Activated T-helper 2 cell treated with anti-CD3 and anti-CD28 coated beads, Interferon-gamma antibody, Interleukin-2, Interleukin-4, amounts not matched to agents 10 μg/mL and 5 μg/mL and 100 μg/mL, durations not matched to agents 14 hours and 24 hours and 36 hours (primary cell): ENCODE measurements at regions of chr11 and their contacts with region 1.

Region 1: DNA sequence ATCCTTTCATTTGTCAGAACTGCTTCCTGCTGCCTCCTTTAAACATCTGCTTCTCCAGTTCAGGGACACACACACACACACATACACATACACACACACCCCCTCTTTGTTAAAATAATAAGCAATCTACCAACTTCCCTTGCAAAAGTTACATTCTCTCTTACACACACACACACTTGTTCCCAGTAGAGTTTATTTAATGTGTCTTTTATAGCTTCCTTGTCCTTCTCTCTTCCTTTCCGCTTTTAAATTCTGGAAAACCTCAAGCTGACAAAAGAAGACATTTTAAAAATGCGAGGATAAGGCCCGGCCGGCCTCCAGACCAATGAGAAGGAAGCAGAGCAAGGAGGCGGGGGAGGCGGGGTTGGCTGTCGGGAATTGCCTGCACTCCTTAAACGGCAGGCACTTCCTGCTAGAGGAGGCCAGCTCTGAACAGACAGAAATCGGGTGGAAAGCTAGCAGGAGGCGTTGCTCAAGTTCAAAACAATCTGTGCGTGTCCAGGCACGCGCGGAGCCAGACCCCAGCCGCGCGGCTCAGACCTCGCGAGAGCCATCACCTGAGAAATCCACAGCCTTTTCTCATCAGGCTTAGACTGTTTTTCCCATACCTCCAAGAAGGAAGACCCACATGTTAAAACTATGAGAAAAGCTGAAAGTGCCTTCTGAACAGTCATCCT is 99.9 kb downstream of the MAML2 start:
- DNase-seq: peak; percentile 74
- H3K4me3 Mint-ChIP-seq: peak overlapping the region; percentile 79
- H3K27ac Mint-ChIP-seq: peak overlapping the region; percentile 89
- H3K4me1 Mint-ChIP-seq: peaks cover 46% of the 10 kb centered on the region
- H3K27me3 Mint-ChIP-seq: no peaks in the 10 kb centered on the region

Region 2: GRCh38 chr11:96207459-96208449 is 35.4 kb before region 1 on chr11:
- intact Hi-C with region 1: loop called (anchors 2 kb)
- DNase-seq: no peak
- H3K4me3 Mint-ChIP-seq: peak overlapping the region; percentile 48
- H3K27ac Mint-ChIP-seq: peak overlapping the region; percentile 85
- H3K4me1 Mint-ChIP-seq: peaks cover 76% of the 10 kb centered on the region
- H3K27me3 Mint-ChIP-seq: no peaks in the 10 kb centered on the region